ENCODE measurements at regions of chr17 and their contacts with region 1.

Region 1: GRCh38 chr17:2266045-2266864 is 37.3 kb downstream of the SMG6 start:
- DNase-seq: peak; percentile 94
- H3K4me3 Mint-ChIP-seq: peak overlapping the region; percentile 79
- H3K27ac Mint-ChIP-seq: peak overlapping the region; percentile 100
- H3K4me1 Mint-ChIP-seq: peaks cover 80% of the 10 kb centered on the region
- H3K27me3 Mint-ChIP-seq: no peaks in the 10 kb centered on the region

Region 2: GRCh38 chr17:2253768-2254406 is 12.4 kb before region 1 on chr17:
- CTCF ChIA-PET with region 1: interaction called, 18 read pairs
- POLR2A ChIA-PET with region 1: interaction called, 159 read pairs
- DNase-seq: peak; percentile 54
- H3K4me3 Mint-ChIP-seq: peak overlapping the region; percentile 14
- H3K27ac Mint-ChIP-seq: peak overlapping the region; percentile 89
- H3K4me1 Mint-ChIP-seq: peaks cover 74% of the 10 kb centered on the region
- H3K27me3 Mint-ChIP-seq: no peaks in the 10 kb centered on the region

Region 3: DNA sequence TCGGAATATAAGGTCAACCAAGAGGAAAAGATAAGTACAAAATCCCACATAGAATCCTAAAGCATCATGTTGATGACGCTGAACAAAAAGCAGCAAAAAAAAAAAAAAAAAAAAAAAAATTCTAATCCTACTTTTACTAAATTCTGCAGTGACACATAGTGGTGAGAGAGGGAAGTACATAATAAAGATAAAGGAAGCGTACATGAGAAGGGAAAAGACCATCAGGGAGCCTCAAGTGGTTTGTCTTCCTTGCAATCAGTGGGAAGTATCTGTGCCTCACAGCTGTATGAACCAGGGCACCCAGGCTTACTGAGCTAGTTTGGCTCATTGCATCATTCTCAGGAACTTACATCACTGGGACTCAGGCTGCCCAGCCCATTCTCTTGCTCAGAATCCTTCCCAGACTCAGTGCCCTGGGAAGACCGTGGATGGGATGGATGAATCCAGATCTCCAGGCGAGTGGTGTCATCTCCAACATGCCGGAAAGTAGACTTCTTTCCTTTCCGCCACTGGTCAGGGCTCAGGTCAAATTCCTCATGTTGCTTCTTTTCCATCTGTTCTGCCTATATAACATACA is 16.1 kb after region 1 on chr17:
- CTCF ChIA-PET with region 1: interaction called, 6 read pairs
- POLR2A ChIA-PET with region 1: interaction called, 14 read pairs
- DNase-seq: no peak
- H3K4me3 Mint-ChIP-seq: no peak overlapping the region
- H3K27ac Mint-ChIP-seq: peak overlapping the region; percentile 56
- H3K4me1 Mint-ChIP-seq: peaks cover 48% of the 10 kb centered on the region
- H3K27me3 Mint-ChIP-seq: no peaks in the 10 kb centered on the region

Region 4: DNA sequence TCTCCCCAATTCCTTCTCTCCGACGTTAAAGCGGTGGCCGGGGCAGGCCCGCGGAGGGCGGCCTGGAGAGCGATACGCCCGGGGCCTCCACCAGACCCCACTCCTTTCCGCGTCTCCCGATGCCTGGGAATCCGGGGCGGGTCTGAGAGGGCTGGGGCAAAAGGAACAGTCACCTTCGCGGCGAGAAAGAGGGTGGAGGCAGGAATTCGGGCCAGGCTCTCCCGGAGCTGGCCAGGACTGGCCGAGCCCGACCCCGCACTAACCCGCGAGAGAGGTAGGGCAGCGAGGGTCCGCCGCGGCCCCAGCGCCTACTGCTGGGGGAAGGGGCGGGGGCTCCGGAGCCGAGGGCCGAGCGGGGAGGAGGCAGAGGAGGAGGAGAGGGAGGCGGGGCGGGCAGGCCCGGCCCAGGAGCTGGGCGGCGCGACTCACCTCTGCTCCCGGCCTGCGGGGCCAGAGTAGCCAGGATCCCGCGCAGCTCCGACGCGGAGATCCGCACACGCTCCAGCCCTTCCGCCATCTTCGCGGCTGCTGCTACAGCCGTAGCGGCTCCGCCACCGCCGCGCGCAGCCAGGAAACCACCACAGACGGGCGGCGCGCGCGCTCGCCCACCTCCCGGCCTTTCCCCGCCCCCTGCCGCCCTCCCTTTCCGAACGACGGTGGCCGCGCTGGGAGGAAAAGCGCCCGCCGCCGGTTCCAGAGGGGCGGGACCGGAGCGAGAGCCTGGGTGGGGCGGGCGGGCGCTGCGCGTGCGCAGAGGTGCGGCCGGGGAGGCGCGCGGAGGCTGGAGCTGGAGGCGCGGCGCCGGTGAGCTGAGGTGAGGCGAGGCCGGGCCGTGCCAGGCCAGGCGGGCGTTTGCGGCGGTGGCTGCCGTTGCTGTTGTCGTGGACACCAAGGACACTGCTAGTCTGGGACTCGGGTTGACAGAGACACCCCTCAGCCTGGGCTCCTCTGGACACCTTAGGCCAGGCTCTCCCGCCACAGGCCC is 37.2 kb after region 1 on chr17 and contains the starts of genes SMG6 and SRR:
- CTCF ChIA-PET with region 1: no interaction called
- POLR2A ChIA-PET with region 1: interaction called, 22 read pairs
- DNase-seq: peak; percentile 96
- H3K4me3 Mint-ChIP-seq: peak within 1 kb of the TSS; percentile 92
- H3K27ac Mint-ChIP-seq: peak within 1 kb of the TSS; percentile 73
- H3K4me1 Mint-ChIP-seq: peaks cover 49% of the 10 kb centered on the region
- H3K27me3 Mint-ChIP-seq: no peaks in the 10 kb centered on the region
- total RNA-seq, gene SMG6: 37.8 to 38.7 TPM
- total RNA-seq, gene SRR: 19.3 to 19.5 TPM

Region 5: GRCh38 chr17:2369551-2370210 is 103.4 kb after region 1 on chr17:
- CTCF ChIA-PET with region 1: no interaction called
- POLR2A ChIA-PET with region 1: no interaction called
- DNase-seq: no peak
- H3K4me3 Mint-ChIP-seq: no peak overlapping the region
- H3K27ac Mint-ChIP-seq: no peak overlapping the region
- H3K4me1 Mint-ChIP-seq: no peaks in the 10 kb centered on the region
- H3K27me3 Mint-ChIP-seq: no peaks in the 10 kb centered on the region